Naive thymus-derived CD4-positive, alpha-beta T cell (primary cell): ENCODE measurements at regions of chr15 and their contacts with region 1.

Region 1: DNA sequence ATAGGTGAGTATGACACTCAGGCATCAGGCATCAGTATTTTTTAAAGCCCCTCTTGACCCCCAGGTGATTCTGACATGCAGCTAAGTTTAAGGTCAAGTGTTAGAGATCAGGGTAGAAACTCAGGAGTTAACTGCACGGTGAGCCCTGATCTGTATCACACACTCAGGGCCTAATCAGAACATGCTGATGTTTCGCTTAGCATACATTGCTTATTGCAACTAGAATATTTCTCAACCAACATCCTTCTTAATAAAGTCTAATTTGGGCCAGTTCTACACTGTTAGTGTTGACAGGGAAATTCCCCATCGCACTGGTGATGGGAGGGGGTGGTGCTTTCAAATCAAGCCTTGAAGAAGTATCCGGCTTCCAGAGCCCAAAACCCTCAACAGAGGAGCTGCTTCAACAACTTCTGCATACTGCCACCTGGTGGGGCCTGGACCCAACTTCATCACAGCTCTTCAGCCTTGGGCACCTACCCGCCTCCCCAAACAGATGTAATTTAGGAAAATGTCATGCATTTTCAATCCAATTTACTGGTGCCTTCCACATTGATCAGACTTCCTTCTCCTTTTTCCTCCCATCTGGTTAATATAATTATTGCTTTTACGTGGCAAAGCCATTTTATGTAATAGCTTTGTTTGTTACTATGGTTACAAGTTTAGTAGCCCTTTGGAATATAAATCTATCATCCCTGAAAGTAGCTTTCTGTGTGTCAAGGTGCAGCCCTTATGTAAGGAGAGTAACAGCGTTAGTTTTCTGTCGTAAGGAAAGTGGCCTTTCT is 312.2 kb downstream of the RORA start:
- DNase-seq: peak; percentile 59 to 89 (median 82)
- ATAC-seq: peak; percentile 99
- H3K4me3 ChIP-seq: no peak overlapping the region
- H3K4me3 Mint-ChIP-seq: peak overlapping the region in 1 of 10 donors; percentile 23
- H3K27ac ChIP-seq: no peak overlapping the region
- H3K27ac Mint-ChIP-seq: peak overlapping the region in 7 of 9 donors; percentile 12 to 79 (median 69)
- H3K4me1 ChIP-seq: peaks cover 5 to 6% of the 10 kb centered on the region in 2 donors
- H3K4me1 Mint-ChIP-seq: peaks cover 7 to 21% (median 10%) of the 10 kb centered on the region in 7 donors
- H3K27me3 ChIP-seq: no peaks in the 10 kb centered on the region
- H3K27me3 Mint-ChIP-seq: peaks cover 0 to 3% (median 0%) of the 10 kb centered on the region in 5 donors

Region 2: DNA sequence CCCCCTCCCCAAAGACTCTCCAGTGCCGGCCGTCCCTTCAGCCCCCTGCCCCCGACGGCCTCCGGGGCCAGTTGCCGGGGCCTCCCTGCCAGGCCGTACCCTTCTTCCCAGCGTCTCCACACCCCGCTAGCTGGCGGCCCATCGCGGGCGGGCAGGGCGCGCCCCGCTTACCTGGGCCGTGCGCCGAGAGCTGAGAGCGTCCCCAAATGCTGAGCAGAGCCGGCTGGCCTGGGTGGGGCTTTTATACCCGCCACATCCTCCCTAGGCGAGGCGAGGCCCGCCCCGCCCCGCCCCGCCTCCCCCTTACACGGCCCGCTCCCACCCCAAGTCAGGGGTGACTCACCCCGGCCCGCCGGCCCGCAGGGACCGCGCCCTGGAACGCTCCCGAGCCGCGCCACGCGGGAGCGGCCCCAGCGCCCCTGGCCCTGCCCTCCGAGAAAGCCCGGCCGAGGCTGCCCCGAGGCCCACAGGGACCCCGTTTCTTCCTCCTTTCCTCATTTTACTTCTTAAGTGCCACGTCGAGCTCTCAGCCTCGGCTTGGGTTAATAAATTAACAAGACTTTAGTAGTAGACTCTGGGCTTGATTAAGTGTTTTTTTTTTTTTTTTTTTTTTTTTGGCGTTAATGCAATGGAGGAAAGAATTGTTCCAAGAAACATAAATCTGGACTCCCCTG is 519.0 kb before region 1 on chr15 and contains the start of gene ANXA2:
- CTCF ChIA-PET with region 1: no interaction called
- POLR2A ChIA-PET with region 1: no interaction called
- intact Hi-C with region 1: loop called in 1 of 2 experiments (anchors 1 kb)
- DNase-seq: peak; percentile 49 to 85 (median 62)
- ATAC-seq: peak; percentile 81
- H3K4me3 ChIP-seq: peak within 1 kb of the TSS; percentile 72
- H3K4me3 Mint-ChIP-seq: peak within 1 kb of the TSS; percentile 83 to 98 (median 87)
- H3K27ac ChIP-seq: peak within 1 kb of the TSS; percentile 61
- H3K27ac Mint-ChIP-seq: peak within 1 kb of the TSS; percentile 87 to 98 (median 95)
- H3K4me1 ChIP-seq: peaks cover 6 to 32% of the 10 kb centered on the region in 2 donors
- H3K4me1 Mint-ChIP-seq: peaks cover 10 to 67% (median 33%) of the 10 kb centered on the region in 7 donors
- H3K27me3 ChIP-seq: no peaks in the 10 kb centered on the region
- H3K27me3 Mint-ChIP-seq: peaks cover 0 to 7% (median 0%) of the 10 kb centered on the region in 5 donors
- total RNA-seq, gene ANXA2: 28.8 to 377 (median 42.4) TPM

Region 3: DNA sequence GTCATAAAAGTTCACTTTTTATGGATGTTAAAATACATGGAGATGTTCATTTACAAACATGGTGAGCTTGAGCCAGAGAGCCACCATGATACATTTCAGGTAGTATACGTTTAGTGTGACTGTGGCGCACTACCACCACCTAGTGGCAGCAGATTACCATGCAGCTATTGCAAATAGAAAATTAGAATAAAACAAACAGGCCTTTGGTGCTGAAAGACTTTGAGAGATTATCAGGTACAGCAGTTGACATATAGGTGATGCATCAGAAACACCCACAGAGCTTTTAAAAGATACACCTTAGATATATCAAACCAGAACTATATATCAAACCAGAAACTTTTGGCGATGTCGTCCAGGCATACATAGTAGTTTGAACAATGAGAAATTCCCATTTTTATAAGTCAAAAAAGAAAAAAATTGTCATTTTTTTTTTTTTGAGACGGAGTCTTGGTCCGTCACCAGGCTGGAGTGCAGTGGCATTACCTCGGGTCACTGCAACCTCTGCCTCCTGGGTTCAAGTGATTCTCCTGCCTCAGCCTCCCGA is 396.0 kb before region 1 on chr15:
- CTCF ChIA-PET with region 1: interaction called, 26 read pairs
- POLR2A ChIA-PET with region 1: no interaction called
- intact Hi-C with region 1: no loop called
- DNase-seq: peak; percentile 50 to 75 (median 67)
- ATAC-seq: peak; percentile 94
- H3K4me3 ChIP-seq: no peak overlapping the region
- H3K4me3 Mint-ChIP-seq: peak overlapping the region in 2 of 10 donors; percentile 1 to 25
- H3K27ac ChIP-seq: no peak overlapping the region
- H3K27ac Mint-ChIP-seq: peak overlapping the region; percentile 1 to 85 (median 59)
- H3K4me1 ChIP-seq: peaks cover 7 to 13% of the 10 kb centered on the region in 2 donors
- H3K4me1 Mint-ChIP-seq: peaks cover 36 to 64% (median 63%) of the 10 kb centered on the region in 7 donors
- H3K27me3 ChIP-seq: no peaks in the 10 kb centered on the region
- H3K27me3 Mint-ChIP-seq: no peaks in the 10 kb centered on the region

Region 4: GRCh38 chr15:60720493-60721256 is 196.2 kb before region 1 on chr15:
- CTCF ChIA-PET with region 1: no interaction called
- POLR2A ChIA-PET with region 1: no interaction called
- intact Hi-C with region 1: loop called in 1 of 2 experiments (anchors 5 kb)
- DNase-seq: peak in 8 of 9 donors; percentile 31 to 68 (median 44)
- ATAC-seq: peak; percentile 81
- H3K4me3 ChIP-seq: peak overlapping the region; percentile 47
- H3K4me3 Mint-ChIP-seq: peak overlapping the region; percentile 64 to 84 (median 80)
- H3K27ac ChIP-seq: peak overlapping the region; percentile 6
- H3K27ac Mint-ChIP-seq: peak overlapping the region; percentile 63 to 92 (median 77)
- H3K4me1 ChIP-seq: peaks cover 27% of the 10 kb centered on the region in 2 donors
- H3K4me1 Mint-ChIP-seq: peaks cover 29 to 65% (median 53%) of the 10 kb centered on the region in 7 donors
- H3K27me3 ChIP-seq: no peaks in the 10 kb centered on the region
- H3K27me3 Mint-ChIP-seq: no peaks in the 10 kb centered on the region

Region 5: GRCh38 chr15:60899322-60899966 is 17.4 kb before region 1 on chr15:
- CTCF ChIA-PET with region 1: interaction called, 5 read pairs
- POLR2A ChIA-PET with region 1: interaction called, 3 read pairs
- intact Hi-C with region 1: loop called in 1 of 2 experiments (anchors 2 kb)
- DNase-seq: peak in 2 of 9 donors; percentile 1 to 36
- ATAC-seq: peak; percentile 81
- H3K4me3 ChIP-seq: no peak overlapping the region
- H3K4me3 Mint-ChIP-seq: peak overlapping the region in 1 of 10 donors; percentile 63
- H3K27ac ChIP-seq: no peak overlapping the region
- H3K27ac Mint-ChIP-seq: peak overlapping the region in 1 of 9 donors; percentile 59
- H3K4me1 ChIP-seq: no peaks in the 10 kb centered on the region
- H3K4me1 Mint-ChIP-seq: peaks cover 0 to 50% (median 0%) of the 10 kb centered on the region in 7 donors
- H3K27me3 ChIP-seq: no peaks in the 10 kb centered on the region
- H3K27me3 Mint-ChIP-seq: peaks cover 0 to 11% (median 0%) of the 10 kb centered on the region in 5 donors

Region 6: GRCh38 chr15:61834076-61834697 is 917.3 kb after region 1 on chr15:
- CTCF ChIA-PET with region 1: no interaction called
- POLR2A ChIA-PET with region 1: no interaction called
- intact Hi-C with region 1: loop called in 1 of 2 experiments (anchors 10 kb)
- DNase-seq: peak; percentile 21 to 74 (median 56)
- ATAC-seq: peak; percentile 85
- H3K4me3 ChIP-seq: no peak overlapping the region
- H3K4me3 Mint-ChIP-seq: peak overlapping the region in 2 of 10 donors; percentile 1 to 11
- H3K27ac ChIP-seq: no peak overlapping the region
- H3K27ac Mint-ChIP-seq: no peak overlapping the region
- H3K4me1 ChIP-seq: no peaks in the 10 kb centered on the region
- H3K4me1 Mint-ChIP-seq: peaks cover 0 to 6% (median 4%) of the 10 kb centered on the region in 7 donors
- H3K27me3 ChIP-seq: no peaks in the 10 kb centered on the region
- H3K27me3 Mint-ChIP-seq: peaks cover 19 to 28% (median 28%) of the 10 kb centered on the region in 5 donors